ENCODE measurements at regions of chr17 and their contacts with region 1.

Region 1: DNA sequence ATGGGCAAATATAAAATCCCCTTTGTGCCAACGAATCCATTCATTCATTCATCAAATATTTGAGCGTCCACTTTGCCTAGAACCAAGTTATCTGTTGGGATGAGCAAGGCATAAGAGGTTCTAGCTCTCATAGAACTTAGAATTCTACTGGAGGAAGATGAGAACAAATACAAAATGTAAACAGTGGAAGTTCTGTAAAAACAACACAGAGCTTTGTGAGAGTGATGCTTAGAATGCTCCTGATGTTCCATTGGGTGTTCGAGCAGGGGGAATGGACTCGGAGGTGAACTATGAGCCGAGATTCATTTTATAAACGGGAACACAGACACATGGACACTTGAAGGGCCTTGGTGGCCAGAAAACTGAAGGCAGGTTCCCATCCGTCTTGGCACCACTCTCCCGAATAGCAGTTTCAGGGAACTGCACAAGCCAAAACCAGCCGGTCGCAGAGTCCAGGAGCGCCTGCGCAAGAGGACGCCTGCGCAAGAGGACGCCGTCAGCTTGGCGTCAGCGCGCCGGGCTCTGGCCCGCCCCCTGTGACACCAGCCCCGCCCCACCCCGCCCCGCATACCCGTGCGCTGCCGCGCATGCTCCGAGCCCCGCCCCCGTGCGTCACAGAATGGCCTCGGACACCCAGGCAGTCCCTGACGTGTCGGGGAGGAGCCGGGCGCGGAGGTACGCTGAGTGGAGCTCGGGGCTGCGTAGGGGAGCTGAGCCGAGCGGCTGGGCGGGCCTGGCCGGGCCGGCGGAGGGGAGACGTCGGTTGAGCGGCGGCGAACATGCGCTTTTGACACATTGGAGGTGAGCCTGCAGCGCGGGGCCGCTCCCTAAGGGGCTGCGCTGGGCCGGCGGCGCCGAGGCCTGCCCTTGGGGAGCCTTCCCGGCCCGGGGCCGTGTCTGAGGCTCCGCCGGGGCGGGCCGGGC is at the start of gene NDEL1:
- DNase-seq: peak; percentile 98
- H3K4me3 Mint-ChIP-seq: peak within 1 kb of the TSS; percentile 88
- H3K27ac Mint-ChIP-seq: peak within 1 kb of the TSS; percentile 92
- H3K4me1 Mint-ChIP-seq: peaks cover 14% of the 10 kb centered on the region
- H3K27me3 Mint-ChIP-seq: no peaks in the 10 kb centered on the region
- total RNA-seq, gene NDEL1: 72.4 and 75.4 TPM in 2 replicates

Region 2: GRCh38 chr17:8138672-8139371 is 296.7 kb before region 1 on chr17:
- intact Hi-C with region 1: loop called (anchors 10 kb)
- DNase-seq: peak; percentile 95
- H3K4me3 Mint-ChIP-seq: no peak overlapping the region
- H3K27ac Mint-ChIP-seq: no peak overlapping the region
- H3K4me1 Mint-ChIP-seq: no peaks in the 10 kb centered on the region
- H3K27me3 Mint-ChIP-seq: peaks cover 11% of the 10 kb centered on the region

Region 3: DNA sequence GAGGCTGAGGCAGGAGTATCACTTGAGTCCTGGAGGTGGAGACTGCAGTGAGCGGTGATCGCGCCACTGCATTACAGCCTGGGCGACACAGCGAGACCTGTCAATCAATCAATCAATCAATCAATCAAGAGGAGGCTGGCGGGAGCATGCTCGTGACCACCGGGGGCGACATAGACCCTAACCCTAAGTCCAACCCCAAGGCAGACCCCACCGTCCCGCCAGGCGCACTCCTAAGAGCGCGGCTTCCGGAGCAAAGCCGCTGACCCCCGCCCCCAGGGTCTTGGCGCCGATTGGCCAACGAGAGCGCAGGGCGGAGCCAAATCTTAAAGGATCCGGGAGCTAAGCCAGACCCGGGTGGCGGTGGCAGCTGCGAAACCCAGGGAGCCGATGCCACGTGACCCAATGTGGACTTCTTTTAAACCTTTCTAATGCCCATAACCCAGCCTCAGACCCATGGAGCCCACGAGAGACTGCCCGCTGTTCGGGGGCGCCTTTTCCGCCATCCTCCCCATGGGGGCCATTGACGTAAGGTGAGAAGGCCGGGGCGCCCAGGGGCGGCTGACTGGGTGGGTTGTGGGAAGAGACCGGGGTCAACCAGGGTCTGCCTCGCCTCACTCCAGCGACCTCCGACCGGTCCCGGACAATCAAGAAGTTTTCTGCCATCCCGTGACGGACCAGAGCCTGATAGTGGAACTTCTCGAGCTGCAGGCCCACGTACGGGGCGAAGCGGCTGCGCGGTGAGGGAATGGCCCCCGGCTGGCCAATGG is 147.0 kb before region 1 on chr17 and contains the start of gene RANGRF:
- intact Hi-C with region 1: loop called (anchors 1 kb)
- DNase-seq: peak; percentile 85
- H3K4me3 Mint-ChIP-seq: peak within 1 kb of the TSS; percentile 86
- H3K27ac Mint-ChIP-seq: peak within 1 kb of the TSS; percentile 92
- H3K4me1 Mint-ChIP-seq: peaks cover 37% of the 10 kb centered on the region
- H3K27me3 Mint-ChIP-seq: no peaks in the 10 kb centered on the region
- total RNA-seq, gene RANGRF: 52.9 and 57.9 TPM in 2 replicates

Region 4: DNA sequence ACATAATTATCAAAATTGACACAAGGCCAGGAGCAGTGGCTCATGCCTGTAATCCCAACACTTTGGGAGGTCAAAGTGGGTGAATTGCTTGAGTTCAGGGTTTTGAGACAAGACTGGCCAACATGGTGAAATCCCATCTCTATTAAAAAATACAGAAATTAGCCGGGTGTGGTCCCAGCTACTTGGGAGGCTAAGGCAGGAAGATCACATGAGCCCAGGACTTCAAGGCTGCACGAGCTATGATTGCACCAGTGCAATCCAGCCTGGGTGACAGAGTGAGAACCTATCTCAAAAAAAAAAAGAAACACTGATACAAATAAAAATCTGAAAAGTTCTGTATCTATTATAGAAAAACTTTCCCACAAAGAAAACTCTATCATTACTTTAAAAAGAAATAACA is 179.5 kb after region 1 on chr17:
- intact Hi-C with region 1: no loop called
- DNase-seq: no peak
- H3K4me3 Mint-ChIP-seq: no peak overlapping the region
- H3K27ac Mint-ChIP-seq: no peak overlapping the region
- H3K4me1 Mint-ChIP-seq: no peaks in the 10 kb centered on the region
- H3K27me3 Mint-ChIP-seq: peaks cover 19% of the 10 kb centered on the region

Region 5: DNA sequence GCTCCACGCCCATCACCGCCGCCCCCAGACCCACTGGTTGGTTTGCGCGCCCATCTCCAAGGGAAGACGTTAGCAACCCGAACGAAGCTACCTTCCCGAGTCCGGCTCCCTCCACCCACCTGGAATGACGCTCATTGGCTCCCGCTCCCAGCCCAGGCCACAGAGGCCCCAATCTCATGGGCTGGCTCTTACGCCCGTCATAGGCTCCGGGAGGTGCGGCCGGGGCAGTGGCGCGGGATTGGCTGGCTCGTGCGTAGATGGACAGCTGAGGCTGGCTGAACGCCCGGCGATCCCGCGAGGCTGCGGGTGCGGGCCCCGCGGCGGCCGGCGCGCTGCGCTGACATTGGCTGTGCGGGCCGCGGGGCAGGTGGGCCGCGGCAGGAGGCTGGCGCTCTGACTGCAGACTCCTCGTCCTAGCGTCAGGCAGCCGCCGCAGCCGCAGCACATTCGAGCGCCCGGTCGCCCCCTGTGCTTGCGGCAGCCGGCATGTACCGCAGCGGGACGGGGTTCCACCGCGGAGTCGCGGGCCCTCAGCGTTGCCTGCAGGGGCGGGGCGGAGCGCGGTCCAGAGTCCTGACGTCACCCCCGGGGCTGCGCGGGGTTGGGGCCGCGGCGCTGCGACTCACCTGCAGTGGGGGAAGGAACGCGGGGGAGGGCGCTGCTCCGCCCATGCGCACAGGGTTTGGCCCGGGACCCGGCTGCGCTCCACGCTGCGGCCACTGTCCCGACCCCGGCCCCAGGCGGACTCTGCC is 195.5 kb after region 1 on chr17:
- intact Hi-C with region 1: loop called (anchors 1 kb)
- DNase-seq: peak; percentile 88
- H3K4me3 Mint-ChIP-seq: peak overlapping the region; percentile 92
- H3K27ac Mint-ChIP-seq: no peak overlapping the region
- H3K4me1 Mint-ChIP-seq: peaks cover 18% of the 10 kb centered on the region
- H3K27me3 Mint-ChIP-seq: peaks cover 52% of the 10 kb centered on the region

Region 6: GRCh38 chr17:8745586-8746500 is 310.3 kb after region 1 on chr17:
- intact Hi-C with region 1: loop called (anchors 5 kb)
- DNase-seq: peak; percentile 63
- H3K4me3 Mint-ChIP-seq: peak overlapping the region; percentile 87
- H3K27ac Mint-ChIP-seq: peak overlapping the region; percentile 75
- H3K4me1 Mint-ChIP-seq: peaks cover 13% of the 10 kb centered on the region
- H3K27me3 Mint-ChIP-seq: peaks cover 6% of the 10 kb centered on the region

Measured in activated T-helper 1 cell treated with anti-CD3 and anti-CD28 coated beads, Interleukin-12 subunit alpha, Interleukin-12 subunit beta, Interleukin-2, Interleukin-4 antibody, amounts not matched to agents 30 ng/mL and 10 ng/mL and 1 ng/mL, durations not matched to agents 14 hours and 24 hours and 36 hours (primary cell).